OCI-LY7 (cell line): ENCODE measurements at regions of chr3 and their contacts with region 1.

Region 1: GRCh38 chr3:87410110-87410509 is 133.7 kb upstream of the POU1F1 start:
- DNase-seq: no peak
- H3K4me3 ChIP-seq: no peak overlapping the region
- H3K27ac ChIP-seq: no peak overlapping the region
- H3K4me1 ChIP-seq: no peaks in the 10 kb centered on the region
- CTCF ChIP-seq: no peak

Region 2: GRCh38 chr3:87006844-87007439 is 403.2 kb before region 1 on chr3:
- CTCF ChIA-PET with region 1: no interaction called
- POLR2A ChIA-PET with region 1: no interaction called
- intact Hi-C with region 1: no loop called
- DNase-seq: no peak
- H3K4me3 ChIP-seq: no peak overlapping the region
- H3K27ac ChIP-seq: no peak overlapping the region
- H3K4me1 ChIP-seq: no peaks in the 10 kb centered on the region
- CTCF ChIP-seq: peak; percentile 58

Region 3: DNA sequence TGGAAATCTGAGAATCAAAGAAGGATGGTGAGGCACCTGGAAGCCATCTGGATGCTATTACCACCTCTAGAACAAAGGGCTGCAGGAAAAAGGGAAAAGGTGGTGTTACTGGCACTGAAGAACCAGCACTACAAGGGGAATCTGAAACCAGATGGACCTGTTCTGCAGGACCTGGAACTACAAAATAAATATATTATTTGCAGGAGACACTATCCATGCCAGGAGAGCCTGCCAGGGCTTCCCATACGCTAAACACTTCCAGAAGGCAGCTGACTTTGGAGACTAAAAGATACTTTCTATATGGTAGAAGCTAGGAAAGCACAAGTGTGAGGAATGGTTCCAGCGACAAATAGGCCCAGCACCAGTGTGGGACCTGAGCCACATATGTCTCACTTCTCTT is 50.3 kb before region 1 on chr3:
- CTCF ChIA-PET with region 1: no interaction called
- POLR2A ChIA-PET with region 1: no interaction called
- intact Hi-C with region 1: no loop called
- DNase-seq: no peak
- H3K4me3 ChIP-seq: no peak overlapping the region
- H3K27ac ChIP-seq: no peak overlapping the region
- H3K4me1 ChIP-seq: peaks cover 12% of the 10 kb centered on the region
- CTCF ChIP-seq: no peak

Region 4: GRCh38 chr3:87397210-87397609 is 12.9 kb before region 1 on chr3:
- CTCF ChIA-PET with region 1: no interaction called
- POLR2A ChIA-PET with region 1: interaction called, 11 read pairs
- intact Hi-C with region 1: no loop called
- DNase-seq: no peak
- H3K4me3 ChIP-seq: no peak overlapping the region
- H3K27ac ChIP-seq: no peak overlapping the region
- H3K4me1 ChIP-seq: no peaks in the 10 kb centered on the region
- CTCF ChIP-seq: no peak